MCF 10A (cell line): ENCODE measurements at regions of chr4 and their contacts with region 1.

Region 1: GRCh38 chr4:39697740-39698423 is at the start of gene UBE2K:
- DNase-seq: peak; percentile 90
- H3K4me3 Mint-ChIP-seq: peak within 1 kb of the TSS; percentile 98
- H3K27ac Mint-ChIP-seq: peak within 1 kb of the TSS; percentile 97
- H3K4me1 Mint-ChIP-seq: peaks cover 17% of the 10 kb centered on the region
- H3K27me3 Mint-ChIP-seq: no peaks in the 10 kb centered on the region
- CTCF ChIP-seq: no peak
- total RNA-seq, gene UBE2K: 117 and 121 TPM in 2 replicates

Region 2: DNA sequence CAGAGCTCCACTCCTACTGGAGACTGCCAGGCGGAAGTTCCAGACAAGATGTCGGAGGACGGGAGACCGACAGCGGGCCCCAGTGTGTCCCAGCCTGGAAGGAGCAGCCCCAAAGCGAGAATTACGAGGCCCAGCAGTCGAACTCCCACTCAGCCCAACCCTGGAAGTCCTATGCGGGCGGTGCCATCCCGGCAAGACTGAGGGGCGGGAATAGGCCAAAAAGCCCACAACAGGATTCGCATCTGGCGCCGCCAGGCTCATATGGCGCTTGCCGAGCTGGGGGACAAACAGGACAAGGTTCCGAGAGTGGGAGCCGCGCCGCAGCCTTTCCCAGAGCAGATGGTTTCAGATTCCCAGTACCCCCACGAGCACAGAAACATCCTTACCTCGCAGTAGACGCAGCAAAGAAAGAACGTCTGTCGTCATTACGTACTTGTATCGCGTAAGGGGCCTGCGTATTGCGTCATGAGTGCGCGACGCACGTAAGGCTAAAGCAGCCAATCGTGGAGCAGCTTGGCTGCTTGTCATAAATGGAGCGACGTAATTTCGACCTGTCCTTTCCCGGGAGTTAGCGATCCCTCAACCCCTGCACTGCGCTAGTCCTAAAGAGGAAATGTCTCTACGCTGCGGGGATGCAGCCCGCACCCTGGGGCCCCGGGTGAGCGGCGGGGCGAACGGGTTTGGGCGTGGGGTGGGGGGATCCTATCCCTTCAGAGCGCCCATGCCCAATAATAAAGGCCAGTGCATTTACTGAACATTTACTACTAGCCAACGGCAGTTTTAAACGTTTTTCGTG is 239.2 kb before region 1 on chr4 and contains the starts of genes LIAS and RPL9:
- CTCF ChIA-PET with region 1: no interaction called
- POLR2A ChIA-PET with region 1: interaction called, 21 read pairs
- intact Hi-C with region 1: no loop called
- DNase-seq: peak; percentile 98
- H3K4me3 Mint-ChIP-seq: peak within 1 kb of the TSS; percentile 95
- H3K27ac Mint-ChIP-seq: peak within 1 kb of the TSS; percentile 100
- H3K4me1 Mint-ChIP-seq: peaks cover 7% of the 10 kb centered on the region
- H3K27me3 Mint-ChIP-seq: no peaks in the 10 kb centered on the region
- CTCF ChIP-seq: no peak
- total RNA-seq, gene LIAS: 21.6 and 24.6 TPM in 2 replicates
- total RNA-seq, gene RPL9: 1,405 and 1,620 TPM in 2 replicates

Region 3: DNA sequence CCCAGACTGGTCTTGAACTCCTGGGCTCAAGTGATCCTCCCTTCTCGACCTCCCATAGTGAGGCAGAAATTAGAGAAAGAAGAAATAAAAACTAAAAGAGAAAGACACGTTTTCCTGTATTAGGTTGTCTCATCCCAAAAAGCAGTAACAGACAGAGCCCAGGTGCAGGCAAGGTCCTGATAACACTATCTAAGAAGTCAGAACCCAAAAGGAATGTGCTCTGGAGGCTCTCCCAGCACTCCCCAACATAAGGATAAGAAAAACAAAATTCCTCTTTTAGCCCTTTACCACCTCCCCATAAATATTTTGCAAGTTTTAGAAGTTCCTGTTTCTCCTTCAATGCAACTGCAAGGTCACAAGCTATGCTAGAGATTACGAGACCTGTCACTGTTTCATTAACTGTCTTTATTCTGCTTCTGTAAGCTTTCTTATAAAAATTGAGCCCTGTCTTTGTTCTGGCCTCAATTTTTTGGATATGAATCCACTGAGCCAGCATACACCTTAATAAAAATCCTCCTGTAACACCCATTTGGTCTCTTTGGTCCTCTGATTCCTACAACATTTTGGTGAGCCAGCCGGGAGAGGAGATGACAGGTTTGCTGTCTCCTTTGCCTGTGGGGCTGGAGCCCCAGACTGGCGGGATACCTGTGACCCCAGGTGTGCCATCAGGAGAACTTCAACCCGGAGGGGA is 213.2 kb before region 1 on chr4:
- CTCF ChIA-PET with region 1: no interaction called
- POLR2A ChIA-PET with region 1: no interaction called
- intact Hi-C with region 1: no loop called
- DNase-seq: no peak
- H3K4me3 Mint-ChIP-seq: no peak overlapping the region
- H3K27ac Mint-ChIP-seq: no peak overlapping the region
- H3K4me1 Mint-ChIP-seq: no peaks in the 10 kb centered on the region
- H3K27me3 Mint-ChIP-seq: no peaks in the 10 kb centered on the region
- CTCF ChIP-seq: no peak

Region 4: DNA sequence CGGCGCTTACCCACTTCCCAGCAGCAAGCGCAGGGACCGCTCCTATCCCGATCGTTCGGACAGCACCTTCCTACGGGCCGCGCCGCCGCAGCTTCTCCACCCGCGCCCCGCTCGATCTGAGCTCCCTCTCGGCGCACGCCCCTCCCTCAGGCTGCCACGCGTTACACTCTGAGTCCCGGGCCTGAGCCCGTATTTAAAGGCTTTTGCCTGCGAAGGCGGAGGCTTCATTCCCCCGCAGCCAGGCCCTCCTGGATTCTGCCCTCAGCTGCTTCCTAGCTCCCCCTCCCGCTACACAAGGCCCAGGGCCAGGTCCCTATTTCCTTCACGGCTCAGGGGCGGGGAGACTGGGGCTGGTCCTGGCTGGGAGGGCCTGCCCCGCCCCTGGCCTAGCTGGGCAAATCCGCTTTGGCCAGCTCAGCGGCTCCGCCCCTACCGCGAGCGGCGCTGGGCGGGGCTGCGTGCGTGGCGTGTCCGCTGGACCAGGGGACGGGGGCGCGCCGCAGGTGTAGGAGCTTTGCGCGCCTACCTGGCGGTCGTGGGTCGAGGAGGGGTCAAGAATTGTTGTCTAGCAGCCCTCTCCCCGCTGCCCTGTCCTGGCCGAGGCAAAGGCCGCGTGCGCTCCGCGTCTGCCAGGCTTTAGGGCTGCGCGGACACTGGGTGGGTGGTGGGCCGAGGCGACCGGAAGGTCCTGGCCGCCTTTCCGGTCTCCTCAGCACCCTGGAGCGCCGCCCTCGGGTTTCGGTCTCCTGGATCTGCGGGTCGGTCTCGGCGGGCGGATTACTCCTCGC is 170.4 kb before region 1 on chr4 and contains the start of gene UGDH:
- CTCF ChIA-PET with region 1: no interaction called
- POLR2A ChIA-PET with region 1: interaction called, 16 read pairs
- intact Hi-C with region 1: no loop called
- DNase-seq: peak; percentile 98
- H3K4me3 Mint-ChIP-seq: peak within 1 kb of the TSS; percentile 98
- H3K27ac Mint-ChIP-seq: peak within 1 kb of the TSS; percentile 94
- H3K4me1 Mint-ChIP-seq: peaks cover 9% of the 10 kb centered on the region
- H3K27me3 Mint-ChIP-seq: no peaks in the 10 kb centered on the region
- CTCF ChIP-seq: no peak
- total RNA-seq, gene UGDH: 50.9 and 61.7 TPM in 2 replicates

Region 5: DNA sequence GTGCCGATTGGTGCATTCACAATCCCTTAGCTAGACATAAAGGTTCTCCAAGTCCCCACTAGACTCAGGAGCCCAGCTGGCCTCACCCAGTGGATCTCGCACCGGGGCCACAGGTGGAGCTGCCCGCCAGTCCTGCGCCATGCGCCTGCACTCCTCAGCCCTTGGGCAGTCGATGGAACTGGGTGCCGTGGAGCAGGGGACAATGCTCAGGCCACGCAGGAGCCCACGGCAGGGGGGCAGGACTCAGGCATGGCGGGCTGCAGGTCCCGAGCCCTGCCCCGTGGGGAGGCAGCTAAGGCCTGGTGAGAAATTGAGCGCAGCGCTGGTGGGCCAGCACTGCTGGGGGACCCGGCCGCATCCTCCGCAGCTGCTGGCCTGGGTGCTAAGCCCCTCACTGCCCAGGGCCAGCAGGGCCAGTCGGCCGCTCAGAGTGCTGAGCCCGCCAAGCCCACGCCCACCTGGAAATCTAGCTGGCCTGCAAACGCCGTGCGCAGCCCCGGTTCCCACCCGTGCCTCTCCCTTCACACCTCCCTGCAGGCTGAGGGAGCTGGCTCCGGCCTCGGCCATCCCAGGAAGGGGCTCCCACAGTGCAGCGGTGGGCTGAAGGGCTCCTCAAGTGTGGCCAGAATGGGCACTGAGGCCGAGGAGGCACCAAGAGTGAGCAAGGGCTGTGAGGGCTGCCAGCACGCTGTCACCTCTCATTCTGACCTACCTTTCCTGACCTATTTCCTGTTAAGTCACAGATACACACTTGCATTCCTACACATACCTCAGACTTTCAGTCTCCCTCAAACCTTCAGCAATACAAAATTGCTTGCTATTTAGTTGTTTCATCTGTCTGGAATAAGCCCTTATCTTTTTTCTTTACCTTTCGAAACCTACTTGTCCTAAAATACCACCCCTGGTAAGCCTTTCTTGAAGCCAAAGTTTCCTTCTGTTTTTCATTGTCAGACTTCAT is 20.8 kb after region 1 on chr4:
- CTCF ChIA-PET with region 1: no interaction called
- POLR2A ChIA-PET with region 1: interaction called, 14 read pairs
- intact Hi-C with region 1: no loop called
- DNase-seq: no peak
- H3K4me3 Mint-ChIP-seq: no peak overlapping the region
- H3K27ac Mint-ChIP-seq: no peak overlapping the region
- H3K4me1 Mint-ChIP-seq: peaks cover 17% of the 10 kb centered on the region
- H3K27me3 Mint-ChIP-seq: no peaks in the 10 kb centered on the region
- CTCF ChIP-seq: no peak

Region 6: DNA sequence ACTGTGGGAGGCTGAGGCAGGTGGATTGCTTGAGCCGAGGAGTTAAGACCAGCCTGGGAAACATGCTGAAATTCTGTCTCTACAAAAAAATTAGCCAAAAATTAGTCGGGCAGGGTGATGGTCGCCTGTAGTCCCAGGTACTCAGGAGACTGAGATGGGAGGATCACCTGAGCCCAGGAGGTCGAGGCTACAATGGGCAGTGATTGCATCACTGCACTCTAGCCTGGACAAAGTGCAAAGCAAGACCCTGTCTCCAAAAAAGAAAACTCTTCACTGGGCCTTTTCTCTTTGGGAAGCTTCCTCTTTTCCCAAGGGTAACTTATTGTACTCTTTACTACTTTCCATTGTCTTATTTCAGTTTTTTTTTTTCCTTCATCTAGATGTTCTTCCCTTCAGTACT is 89.0 kb after region 1 on chr4:
- CTCF ChIA-PET with region 1: no interaction called
- POLR2A ChIA-PET with region 1: no interaction called
- intact Hi-C with region 1: loop called (anchors 10 kb)
- DNase-seq: no peak
- H3K4me3 Mint-ChIP-seq: no peak overlapping the region
- H3K27ac Mint-ChIP-seq: no peak overlapping the region
- H3K4me1 Mint-ChIP-seq: no peaks in the 10 kb centered on the region
- H3K27me3 Mint-ChIP-seq: no peaks in the 10 kb centered on the region
- CTCF ChIP-seq: no peak

Region 7: DNA sequence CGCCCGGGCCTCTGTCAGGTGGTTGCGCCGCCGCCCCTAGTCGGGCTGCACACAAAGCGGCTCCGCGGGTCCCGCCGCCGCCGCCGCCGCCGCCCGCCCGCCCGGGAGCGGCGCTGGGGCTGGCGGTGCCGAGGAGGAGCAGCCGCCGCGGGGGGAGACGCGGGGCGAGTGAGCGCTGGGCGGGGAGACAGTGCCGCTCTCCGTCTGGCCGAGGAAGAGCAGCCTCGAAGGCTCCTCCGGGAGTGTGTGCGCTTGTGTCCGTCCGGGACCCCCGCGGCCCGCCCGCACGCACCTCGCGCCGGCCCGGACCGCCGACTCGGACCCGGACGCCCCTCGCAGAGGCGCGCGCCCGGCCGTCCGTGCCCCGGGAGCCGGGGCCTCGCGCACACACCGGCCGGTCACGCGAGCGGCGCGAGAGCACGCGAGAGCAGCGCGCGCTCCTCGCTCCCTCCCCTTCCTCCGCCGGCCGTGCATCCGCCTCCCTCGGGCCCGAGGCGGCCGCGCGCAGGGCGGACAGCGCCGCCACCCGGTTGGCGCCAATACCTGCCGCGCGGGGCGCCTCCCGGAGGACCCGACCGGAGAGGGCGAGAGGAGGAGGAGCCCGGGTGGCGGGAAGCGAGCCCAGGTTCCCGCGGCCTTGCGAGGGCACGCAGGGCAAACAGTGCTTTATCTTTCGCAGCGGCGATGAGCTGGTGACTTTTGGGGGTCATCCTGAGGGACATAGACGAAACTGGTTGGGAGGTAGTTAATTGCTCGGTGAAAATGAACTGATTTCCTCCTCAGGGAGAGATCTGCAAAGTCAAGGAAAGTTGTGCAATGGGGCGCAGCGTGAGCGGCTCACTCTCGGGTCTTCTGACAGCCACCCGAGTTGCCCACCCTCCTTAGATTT is 279.9 kb after region 1 on chr4 and contains the start of gene PDS5A:
- CTCF ChIA-PET with region 1: interaction called, 8 read pairs
- POLR2A ChIA-PET with region 1: interaction called, 14 read pairs
- intact Hi-C with region 1: loop called (anchors 1 kb)
- DNase-seq: peak; percentile 91
- H3K4me3 Mint-ChIP-seq: peak within 1 kb of the TSS; percentile 82
- H3K27ac Mint-ChIP-seq: peak within 1 kb of the TSS; percentile 83
- H3K4me1 Mint-ChIP-seq: peaks cover 6% of the 10 kb centered on the region
- H3K27me3 Mint-ChIP-seq: no peaks in the 10 kb centered on the region
- CTCF ChIP-seq: peak; percentile 83
- total RNA-seq, gene PDS5A: 86.8 and 95.2 TPM in 2 replicates

Region 8: DNA sequence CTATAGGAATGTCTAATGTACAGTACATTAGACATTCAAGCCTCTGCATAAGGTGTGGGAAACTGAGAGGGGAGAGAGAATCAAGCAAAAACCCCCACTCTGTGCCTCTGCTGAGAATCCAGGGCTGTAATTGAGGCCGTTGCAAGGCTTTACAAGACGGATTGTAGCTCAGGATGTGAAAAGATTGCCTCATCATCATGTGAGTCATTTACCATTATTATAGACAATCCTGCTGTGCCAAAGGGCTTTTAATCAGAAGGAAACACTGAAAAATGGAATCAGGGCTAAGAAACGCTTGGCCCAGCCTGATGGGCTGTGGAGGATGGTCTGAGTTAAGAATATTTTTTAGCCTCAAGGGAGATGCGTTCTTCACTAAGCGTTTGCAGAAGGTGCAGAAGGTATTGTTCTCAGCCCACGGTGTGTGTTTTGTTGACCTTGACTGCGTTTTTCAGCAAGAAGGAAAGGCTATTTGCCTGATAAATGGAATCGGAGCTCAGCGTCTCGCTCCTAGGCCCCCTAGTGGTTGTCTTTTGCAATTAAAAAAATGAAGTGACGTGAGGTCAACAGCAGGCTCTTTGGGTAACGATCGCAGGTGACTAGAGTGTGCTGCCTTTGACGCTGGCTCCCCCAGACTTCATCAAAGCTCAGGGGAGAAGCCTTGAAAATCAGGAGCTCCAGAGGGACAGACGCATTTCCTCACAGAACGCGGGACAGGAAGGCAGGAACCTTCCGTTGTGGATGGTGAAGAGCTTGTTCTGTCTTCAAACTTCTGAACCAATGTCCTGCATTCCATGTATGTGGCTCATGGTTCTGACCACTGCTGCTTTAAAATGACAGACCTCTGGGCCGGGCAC is 619.1 kb after region 1 on chr4:
- CTCF ChIA-PET with region 1: no interaction called
- POLR2A ChIA-PET with region 1: interaction called, 10 read pairs
- intact Hi-C with region 1: loop called (anchors 10 kb)
- DNase-seq: peak; percentile 95
- H3K4me3 Mint-ChIP-seq: peak overlapping the region; percentile 85
- H3K27ac Mint-ChIP-seq: peak overlapping the region; percentile 100
- H3K4me1 Mint-ChIP-seq: peaks cover 55% of the 10 kb centered on the region
- H3K27me3 Mint-ChIP-seq: no peaks in the 10 kb centered on the region
- CTCF ChIP-seq: peak; percentile 61